Activated CD8-positive, alpha-beta T cell treated with anti-CD3 and anti-CD28 coated beads, Interleukin-2, amount 10 ng/mL, durations not matched to agents 7 days and 5 days (primary cell): ENCODE measurements at regions of chr6 and their contacts with region 1.

Region 1: GRCh38 chr6:99588618-99589289 is 17.9 kb upstream of the PRDM13 start:
- DNase-seq: peak; percentile 77
- ATAC-seq: peak; percentile 93
- H3K4me3 Mint-ChIP-seq: peak overlapping the region; percentile 80
- H3K27ac Mint-ChIP-seq: no peak overlapping the region
- H3K4me1 Mint-ChIP-seq: peaks cover 33% of the 10 kb centered on the region
- H3K27me3 Mint-ChIP-seq: peaks cover 75% of the 10 kb centered on the region

Region 2: GRCh38 chr6:99467509-99468106 is 121.1 kb before region 1 on chr6:
- CTCF ChIA-PET with region 1: interaction called, 12 read pairs
- POLR2A ChIA-PET with region 1: no interaction called
- DNase-seq: no peak
- ATAC-seq: no peak
- H3K4me3 Mint-ChIP-seq: no peak overlapping the region
- H3K27ac Mint-ChIP-seq: no peak overlapping the region
- H3K4me1 Mint-ChIP-seq: no peaks in the 10 kb centered on the region
- H3K27me3 Mint-ChIP-seq: no peaks in the 10 kb centered on the region

Region 3: GRCh38 chr6:99568103-99568933 is 20.4 kb before region 1 on chr6 and contains the start of gene CCNC:
- CTCF ChIA-PET with region 1: interaction called, 13 read pairs
- POLR2A ChIA-PET with region 1: interaction called, 13 read pairs
- DNase-seq: peak; percentile 93
- ATAC-seq: peak; percentile 98
- H3K4me3 Mint-ChIP-seq: peak within 1 kb of the TSS; percentile 100
- H3K27ac Mint-ChIP-seq: peak within 1 kb of the TSS; percentile 97
- H3K4me1 Mint-ChIP-seq: peaks cover 27% of the 10 kb centered on the region
- H3K27me3 Mint-ChIP-seq: no peaks in the 10 kb centered on the region
- total RNA-seq, gene CCNC: 36.8 to 38.7 TPM

Region 4: DNA sequence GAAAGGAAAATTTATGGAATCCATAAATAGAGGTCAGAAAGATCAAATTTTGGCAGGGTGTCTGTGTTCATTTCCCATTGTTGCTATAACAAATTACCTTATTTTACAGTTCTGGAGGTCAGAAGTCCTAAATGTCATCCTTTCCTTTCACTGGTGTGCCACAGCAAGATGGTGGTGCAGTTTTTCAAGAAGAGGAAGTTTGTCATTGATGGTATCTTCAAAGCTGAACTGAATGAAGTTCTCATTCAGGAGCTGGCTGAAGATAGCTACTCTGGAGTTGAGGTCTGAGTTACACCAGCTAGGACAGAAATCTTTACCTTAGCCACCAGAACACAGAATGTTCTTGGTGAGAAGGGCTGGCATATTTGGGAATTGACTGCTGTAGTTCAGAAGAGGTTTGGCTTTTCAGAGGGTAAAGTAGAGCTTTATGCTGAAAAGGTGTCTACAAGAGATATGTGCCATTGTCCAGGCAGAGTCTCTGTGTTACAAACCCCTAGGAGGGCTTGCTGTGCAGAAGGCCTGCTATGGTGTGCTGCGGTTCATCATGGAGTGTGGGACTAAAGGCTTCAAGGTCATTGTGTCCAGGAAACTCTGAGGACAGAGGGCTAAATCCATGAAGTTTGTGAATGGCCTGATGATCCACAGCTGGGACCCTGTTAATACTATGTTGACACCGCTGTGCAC is 13.1 kb before region 1 on chr6:
- CTCF ChIA-PET with region 1: interaction called, 12 read pairs
- POLR2A ChIA-PET with region 1: no interaction called
- DNase-seq: no peak
- ATAC-seq: peak; percentile 44
- H3K4me3 Mint-ChIP-seq: no peak overlapping the region
- H3K27ac Mint-ChIP-seq: no peak overlapping the region
- H3K4me1 Mint-ChIP-seq: peaks cover 17% of the 10 kb centered on the region
- H3K27me3 Mint-ChIP-seq: peaks cover 19% of the 10 kb centered on the region

Region 5: DNA sequence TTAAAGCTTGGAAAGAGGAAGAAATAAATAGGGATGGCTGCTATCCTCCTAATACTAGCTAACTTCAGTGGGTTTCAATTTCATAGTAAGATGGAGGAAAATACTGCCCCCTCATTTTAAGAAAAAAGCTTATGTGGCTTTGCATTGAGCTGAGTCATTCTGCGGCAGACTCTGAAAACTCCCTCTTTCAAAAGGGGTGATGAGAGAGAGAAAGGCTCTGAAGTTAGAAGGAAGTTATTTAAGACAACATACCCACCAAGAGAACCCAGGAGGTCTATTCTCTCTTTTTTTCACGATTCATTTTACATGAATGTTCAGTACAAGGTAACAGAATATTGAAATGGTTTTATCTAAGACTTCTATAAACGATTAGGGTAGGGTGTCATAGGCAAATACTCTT is 22.4 kb after region 1 on chr6:
- CTCF ChIA-PET with region 1: interaction called, 15 read pairs
- POLR2A ChIA-PET with region 1: no interaction called
- DNase-seq: no peak
- ATAC-seq: no peak
- H3K4me3 Mint-ChIP-seq: no peak overlapping the region
- H3K27ac Mint-ChIP-seq: no peak overlapping the region
- H3K4me1 Mint-ChIP-seq: peaks cover 35% of the 10 kb centered on the region
- H3K27me3 Mint-ChIP-seq: peaks cover 76% of the 10 kb centered on the region

Region 6: GRCh38 chr6:99746261-99746895 is 157.6 kb after region 1 on chr6:
- CTCF ChIA-PET with region 1: interaction called, 34 read pairs
- POLR2A ChIA-PET with region 1: no interaction called
- DNase-seq: peak; percentile 70
- ATAC-seq: peak; percentile 74
- H3K4me3 Mint-ChIP-seq: no peak overlapping the region
- H3K27ac Mint-ChIP-seq: no peak overlapping the region
- H3K4me1 Mint-ChIP-seq: no peaks in the 10 kb centered on the region
- H3K27me3 Mint-ChIP-seq: peaks cover 29% of the 10 kb centered on the region